Activated T-helper 2 cell treated with anti-CD3 and anti-CD28 coated beads, Interferon-gamma antibody, Interleukin-2, Interleukin-4, amounts not matched to agents 10 μg/mL and 5 μg/mL and 100 μg/mL, durations not matched to agents 14 hours and 24 hours and 36 hours (primary cell): ENCODE measurements at regions of chr3 and their contacts with region 1.

Region 1: GRCh38 chr3:42012935-42013690 is 51.2 kb upstream of the ULK4 start:
- DNase-seq: peak; percentile 61
- H3K4me3 Mint-ChIP-seq: peak overlapping the region; percentile 88
- H3K27ac Mint-ChIP-seq: peak overlapping the region; percentile 96
- H3K4me1 Mint-ChIP-seq: peaks cover 41% of the 10 kb centered on the region
- H3K27me3 Mint-ChIP-seq: no peaks in the 10 kb centered on the region

Region 2: GRCh38 chr3:41198950-41199865 is 813.9 kb before region 1 on chr3 and contains the start of gene CTNNB1:
- intact Hi-C with region 1: loop called (anchors 10 kb)
- DNase-seq: peak; percentile 89
- H3K4me3 Mint-ChIP-seq: peak within 1 kb of the TSS; percentile 99
- H3K27ac Mint-ChIP-seq: peak within 1 kb of the TSS; percentile 98
- H3K4me1 Mint-ChIP-seq: peaks cover 35% of the 10 kb centered on the region
- H3K27me3 Mint-ChIP-seq: peaks cover 22% of the 10 kb centered on the region
- total RNA-seq, gene CTNNB1: 230 and 238 TPM in 2 replicates

Region 3: DNA sequence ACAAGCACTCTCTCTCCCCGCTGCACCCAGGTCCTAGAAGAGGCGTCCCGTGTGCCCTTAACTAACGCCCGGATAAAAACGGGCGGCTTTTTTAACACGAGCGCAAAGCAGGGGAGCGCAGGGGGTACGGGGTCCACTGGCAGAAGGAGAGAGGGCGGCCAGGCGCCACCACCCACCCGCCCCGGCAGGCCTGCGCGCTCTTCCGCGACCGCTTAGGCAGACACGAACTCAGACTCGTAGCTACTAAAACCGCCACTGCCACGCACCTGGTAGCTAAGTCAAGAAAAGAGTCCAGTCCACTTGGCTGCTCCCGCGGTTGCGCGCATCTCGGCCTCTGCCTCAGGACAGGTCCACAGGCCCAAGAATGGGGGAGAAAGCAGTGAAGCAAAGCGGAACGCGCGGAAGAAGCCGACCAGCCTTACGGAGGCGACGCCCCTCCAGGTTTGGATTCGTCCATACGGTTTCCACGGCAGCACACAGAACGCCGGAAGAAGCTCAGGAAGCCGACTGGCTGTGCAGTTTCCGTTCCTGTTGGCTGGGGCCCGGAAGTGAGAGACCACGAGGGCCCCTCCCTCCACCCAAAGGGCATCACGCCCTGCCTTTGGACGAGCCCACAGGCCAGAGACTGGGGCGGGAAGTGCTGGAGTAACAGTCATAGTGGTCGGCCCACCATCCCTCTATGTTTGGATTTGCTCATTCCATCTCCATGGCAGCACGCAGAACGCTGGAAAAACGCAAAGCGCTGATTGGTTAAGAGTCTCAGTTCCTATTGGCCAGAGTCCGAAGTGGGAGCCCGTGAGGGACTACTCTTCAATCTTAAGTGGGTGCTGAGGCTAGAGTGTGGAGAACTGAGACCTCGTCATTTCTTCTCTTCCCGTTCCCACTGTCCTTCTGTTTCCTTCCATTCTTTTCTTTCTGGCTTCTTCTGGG is 51.1 kb before region 1 on chr3 and contains the start of gene ULK4:
- intact Hi-C with region 1: loop called (anchors 1 kb)
- DNase-seq: peak; percentile 94
- H3K4me3 Mint-ChIP-seq: peak within 1 kb of the TSS; percentile 96
- H3K27ac Mint-ChIP-seq: peak within 1 kb of the TSS; percentile 90
- H3K4me1 Mint-ChIP-seq: peaks cover 19% of the 10 kb centered on the region
- H3K27me3 Mint-ChIP-seq: peaks cover under 1% of the 10 kb centered on the region
- total RNA-seq, gene ULK4: 7.5 and 8.1 TPM in 2 replicates

Region 4: DNA sequence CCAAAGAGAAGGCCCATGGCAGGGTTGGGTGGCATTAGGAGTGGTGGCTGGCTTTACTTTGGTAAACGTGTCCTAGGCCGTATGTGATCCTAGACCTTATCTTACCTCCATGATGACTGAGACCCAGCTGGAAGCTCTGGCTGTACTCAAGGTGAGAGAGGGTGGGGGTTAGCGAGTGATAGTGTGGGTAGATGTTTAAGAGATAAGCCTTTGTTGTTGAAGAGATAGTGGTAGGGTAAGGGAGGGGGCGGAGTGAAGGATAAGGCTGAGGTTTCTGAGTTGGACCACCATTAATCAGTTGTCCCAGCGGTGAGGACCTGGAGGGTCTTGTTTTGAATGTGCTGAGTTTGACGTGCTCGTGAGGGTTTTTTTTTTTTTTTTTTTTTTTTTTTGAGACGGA is 10.3 kb after region 1 on chr3:
- intact Hi-C with region 1: loop called (anchors 1 kb)
- DNase-seq: peak; percentile 14
- H3K4me3 Mint-ChIP-seq: peak overlapping the region; percentile 37
- H3K27ac Mint-ChIP-seq: peak overlapping the region; percentile 82
- H3K4me1 Mint-ChIP-seq: peaks cover 65% of the 10 kb centered on the region
- H3K27me3 Mint-ChIP-seq: no peaks in the 10 kb centered on the region

Region 5: DNA sequence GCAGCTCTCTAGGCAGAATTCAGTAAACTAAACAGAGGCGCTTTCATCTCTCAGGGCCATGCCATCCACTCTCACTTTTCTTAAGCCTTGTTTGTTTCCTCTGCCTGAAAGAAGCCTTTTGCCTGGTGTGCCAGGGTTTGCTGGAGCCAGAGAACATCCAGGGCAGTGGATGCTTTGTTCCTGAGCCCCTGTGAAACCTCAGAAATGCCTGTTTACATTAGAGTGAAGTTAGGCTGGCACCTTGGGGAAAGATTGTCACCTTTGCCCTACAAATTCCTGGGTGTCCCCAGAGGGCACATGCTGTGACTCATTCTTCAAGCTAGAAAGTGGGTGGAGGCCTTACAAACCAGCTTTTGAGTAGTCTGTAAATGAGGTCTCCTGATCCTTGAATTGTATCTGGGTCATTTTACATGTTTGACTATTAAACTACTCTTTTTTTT is 67.4 kb after region 1 on chr3:
- intact Hi-C with region 1: loop called (anchors 1 kb)
- DNase-seq: no peak
- H3K4me3 Mint-ChIP-seq: no peak overlapping the region
- H3K27ac Mint-ChIP-seq: peak overlapping the region; percentile 96
- H3K4me1 Mint-ChIP-seq: peaks cover 48% of the 10 kb centered on the region
- H3K27me3 Mint-ChIP-seq: no peaks in the 10 kb centered on the region

Region 6: DNA sequence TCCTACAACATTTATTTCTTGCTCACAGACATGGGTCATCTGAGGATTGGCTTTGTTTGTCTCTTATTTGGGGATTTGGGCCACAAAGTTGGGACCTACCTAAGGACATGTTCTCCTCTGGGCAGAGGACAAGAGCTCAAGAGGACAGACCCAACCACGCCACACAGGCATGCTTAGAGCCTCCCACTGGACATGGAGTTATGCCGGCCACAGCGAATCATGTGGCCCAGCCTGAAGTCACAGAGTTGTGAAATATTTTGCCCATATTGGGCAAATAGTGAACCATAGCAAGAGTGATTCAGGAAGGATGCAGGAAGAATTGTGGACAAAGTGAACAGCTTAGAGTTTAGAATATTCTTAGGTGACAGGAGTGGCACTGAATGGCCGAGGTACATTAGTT is 87.9 kb after region 1 on chr3:
- intact Hi-C with region 1: loop called (anchors 1 kb)
- DNase-seq: no peak
- H3K4me3 Mint-ChIP-seq: no peak overlapping the region
- H3K27ac Mint-ChIP-seq: no peak overlapping the region
- H3K4me1 Mint-ChIP-seq: peaks cover 26% of the 10 kb centered on the region
- H3K27me3 Mint-ChIP-seq: no peaks in the 10 kb centered on the region